GM12878 (cell line): ENCODE measurements at regions of chr13 and their contacts with region 1.

Region 1: GRCh38 chr13:52652196-52652979 is at the start of gene SUGT1:
- DNase-seq: peak; percentile 92
- ATAC-seq: peak; percentile 96
- H3K4me3 ChIP-seq: peak within 1 kb of the TSS; percentile 79
- H3K27ac ChIP-seq: peak within 1 kb of the TSS; percentile 94
- H3K4me1 ChIP-seq: no peaks in the 10 kb centered on the region; the same call in 1 of the 2 replicates
- H3K27me3 ChIP-seq: no peaks in the 10 kb centered on the region
- CTCF ChIP-seq: peak; percentile 55 to 81 (median 73)
- EP300 ChIP-seq: no peak
- POLR2A ChIP-seq: peak; percentile 79
- RAD21 ChIP-seq: no peak
- polyA plus RNA-seq, gene SUGT1: 82.5 to 85.6 TPM

Region 2: DNA sequence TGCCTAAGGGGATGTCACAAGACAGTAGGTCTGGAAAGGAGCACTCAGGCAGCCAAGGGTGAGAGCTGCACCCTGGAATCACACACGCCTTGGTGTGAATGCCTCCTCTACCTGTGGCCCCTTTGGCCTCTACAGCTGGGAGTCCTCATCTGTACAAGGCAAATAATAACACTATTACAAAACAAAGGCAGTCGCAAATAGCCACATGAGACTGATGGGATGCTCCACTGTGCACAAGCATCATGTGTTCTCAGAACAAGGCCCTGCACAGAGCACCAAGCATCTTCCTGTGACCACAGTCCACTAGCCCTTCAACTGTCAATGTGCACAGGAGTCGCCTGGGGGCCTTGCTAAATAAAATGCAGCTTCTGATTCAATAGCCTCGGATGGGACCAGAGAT is 54.7 kb before region 1 on chr13:
- CTCF ChIA-PET with region 1: no interaction called
- POLR2A ChIA-PET with region 1: no interaction called
- RAD21 ChIA-PET with region 1: no interaction called
- SMC1A ChIA-PET with region 1: no interaction called
- in situ Hi-C with region 1: no loop called
- intact Hi-C with region 1: no loop called
- DNase-seq: no peak
- ATAC-seq: no peak
- H3K4me3 ChIP-seq: no peak overlapping the region
- H3K27ac ChIP-seq: no peak overlapping the region
- H3K4me1 ChIP-seq: no peaks in the 10 kb centered on the region
- H3K27me3 ChIP-seq: peaks cover 0 to 1% of the 10 kb centered on the region in 2 experiments; a peak in 1 of 4 replicates
- CTCF ChIP-seq: no peak
- EP300 ChIP-seq: no peak
- POLR2A ChIP-seq: no peak
- RAD21 ChIP-seq: no peak

Region 3: GRCh38 chr13:52617070-52618060 is 35.0 kb before region 1 on chr13:
- CTCF ChIA-PET with region 1: interaction called, 33 read pairs
- POLR2A ChIA-PET with region 1: interaction called, 19 read pairs
- RAD21 ChIA-PET with region 1: interaction called, 30 read pairs
- SMC1A ChIA-PET with region 1: interaction called, 28 read pairs
- in situ Hi-C with region 1: no loop called
- intact Hi-C with region 1: loop called (anchors 1 kb)
- DNase-seq: peak; percentile 56
- ATAC-seq: peak; percentile 96
- H3K4me3 ChIP-seq: peak overlapping the region; percentile 98
- H3K27ac ChIP-seq: peak overlapping the region; percentile 58
- H3K4me1 ChIP-seq: peaks cover 6% of the 10 kb centered on the region; the same call in 1 of the 2 replicates
- H3K27me3 ChIP-seq: no peaks in the 10 kb centered on the region
- CTCF ChIP-seq: no peak
- EP300 ChIP-seq: no peak; a peak in 1 of 4 replicates
- POLR2A ChIP-seq: peak; percentile 86
- RAD21 ChIP-seq: 0 out of 2 replicates have a peak, but pooled peaks have one; percentile 9

Region 4: DNA sequence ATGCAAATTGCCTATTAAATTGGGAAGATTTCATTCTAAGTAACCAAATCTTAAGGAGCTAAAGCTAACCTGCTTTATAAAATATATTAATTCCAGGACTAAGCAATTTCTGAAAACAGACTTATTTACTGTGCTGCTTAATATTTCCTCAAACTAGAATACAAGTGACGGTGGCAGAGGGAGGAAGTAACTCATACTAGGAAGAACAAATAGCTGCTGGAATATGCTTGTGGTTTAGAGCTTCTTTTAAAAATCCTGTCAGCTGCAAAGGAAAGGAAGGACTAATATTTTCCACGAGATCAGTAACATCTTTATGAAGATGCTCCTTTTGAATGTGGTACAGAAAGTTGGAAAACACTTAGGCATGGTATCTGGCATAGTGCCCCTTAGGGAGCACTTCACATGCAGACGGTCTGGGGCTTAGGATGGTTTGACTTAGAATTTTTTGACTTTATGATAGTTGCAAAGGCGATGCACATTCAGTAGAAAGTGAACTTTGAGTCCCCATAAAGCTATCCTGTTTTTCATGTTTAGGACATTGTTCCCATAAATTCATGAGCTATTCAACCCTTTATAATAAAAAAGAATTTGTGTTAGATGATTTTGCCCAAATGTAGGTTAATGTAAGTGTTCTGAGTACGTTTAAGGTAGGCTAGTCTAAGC is 13.6 kb before region 1 on chr13:
- CTCF ChIA-PET with region 1: interaction called, 11 read pairs
- POLR2A ChIA-PET with region 1: no interaction called
- RAD21 ChIA-PET with region 1: no interaction called
- SMC1A ChIA-PET with region 1: interaction called, 4 read pairs
- in situ Hi-C with region 1: no loop called
- intact Hi-C with region 1: no loop called
- DNase-seq: no peak
- ATAC-seq: no peak
- H3K4me3 ChIP-seq: no peak overlapping the region
- H3K27ac ChIP-seq: no peak overlapping the region
- H3K4me1 ChIP-seq: no peaks in the 10 kb centered on the region
- H3K27me3 ChIP-seq: no peaks in the 10 kb centered on the region
- CTCF ChIP-seq: no peak
- EP300 ChIP-seq: no peak
- POLR2A ChIP-seq: no peak
- RAD21 ChIP-seq: no peak